HCT116 (cell line): ENCODE measurements at regions of chr3 and their contacts with region 1.

Region 1: GRCh38 chr3:49929331-49930240 is at the start of gene MON1A:
- DNase-seq: peak; percentile 67
- ATAC-seq: peak; percentile 86
- H3K4me3 ChIP-seq: peak within 1 kb of the TSS; percentile 52 to 68
- H3K27ac ChIP-seq: peak within 1 kb of the TSS; percentile 67
- H3K4me1 ChIP-seq: peaks cover 23 to 43% of the 10 kb centered on the region in 2 experiments
- H3K27me3 ChIP-seq: no peaks in the 10 kb centered on the region
- CTCF ChIP-seq: peak; percentile 32 to 46 (median 32); a peak in 4 of 6 replicates
- POLR2A ChIP-seq: no peak
- RAD21 ChIP-seq: no peak; the same call in 1 of the 2 replicates
- total RNA-seq, gene MON1A: 9.0 TPM

Region 2: DNA sequence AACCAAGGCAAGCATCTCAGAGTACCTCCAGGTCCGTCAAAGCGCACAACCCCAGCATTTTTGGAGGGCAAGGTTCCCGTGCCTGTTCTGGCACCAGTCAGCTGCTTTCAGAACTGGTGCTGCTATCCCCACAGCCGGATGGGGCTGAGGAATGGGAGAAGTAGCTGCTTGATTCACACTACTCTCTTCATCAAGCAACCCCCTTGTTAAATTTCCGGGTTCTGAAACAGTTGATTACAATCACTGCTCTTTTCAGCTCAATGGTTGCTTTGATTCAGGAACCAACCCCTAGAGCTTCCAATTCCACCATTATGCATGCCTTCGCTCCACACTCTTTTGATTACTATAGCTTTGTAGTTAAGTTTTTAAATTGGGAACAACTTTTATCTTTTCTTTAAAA is 103.6 kb before region 1 on chr3:
- CTCF ChIA-PET with region 1: no interaction called
- POLR2A ChIA-PET with region 1: no interaction called
- RAD21 ChIA-PET with region 1: no interaction called
- intact Hi-C with region 1: no loop called
- DNase-seq: no peak
- ATAC-seq: no peak
- H3K4me3 ChIP-seq: no peak overlapping the region
- H3K27ac ChIP-seq: no peak overlapping the region
- H3K4me1 ChIP-seq: no peaks in the 10 kb centered on the region
- H3K27me3 ChIP-seq: no peaks in the 10 kb centered on the region
- CTCF ChIP-seq: no peak
- POLR2A ChIP-seq: no peak
- RAD21 ChIP-seq: no peak

Region 3: GRCh38 chr3:49939858-49940666 is 10.5 kb after region 1 on chr3 and contains the start of gene RBM6:
- CTCF ChIA-PET with region 1: interaction called, 15 read pairs
- POLR2A ChIA-PET with region 1: interaction called, 38 read pairs
- RAD21 ChIA-PET with region 1: no interaction called
- intact Hi-C with region 1: no loop called
- DNase-seq: peak; percentile 93
- ATAC-seq: peak; percentile 97
- H3K4me3 ChIP-seq: peak within 1 kb of the TSS; percentile 82 to 96
- H3K27ac ChIP-seq: peak within 1 kb of the TSS; percentile 91
- H3K4me1 ChIP-seq: peaks cover 5 to 15% of the 10 kb centered on the region in 2 experiments; a peak in 3 of 4 replicates
- H3K27me3 ChIP-seq: no peaks in the 10 kb centered on the region
- CTCF ChIP-seq: no peak
- POLR2A ChIP-seq: peak; percentile 74
- RAD21 ChIP-seq: no peak
- total RNA-seq, gene RBM6: 58.3 TPM

Region 4: GRCh38 chr3:50078622-50079021 is 149.0 kb after region 1 on chr3:
- CTCF ChIA-PET with region 1: no interaction called
- POLR2A ChIA-PET with region 1: no interaction called
- RAD21 ChIA-PET with region 1: no interaction called
- intact Hi-C with region 1: no loop called
- DNase-seq: no peak
- ATAC-seq: no peak
- H3K4me3 ChIP-seq: no peak overlapping the region
- H3K27ac ChIP-seq: no peak overlapping the region
- H3K4me1 ChIP-seq: no peaks in the 10 kb centered on the region
- H3K27me3 ChIP-seq: no peaks in the 10 kb centered on the region
- CTCF ChIP-seq: no peak
- POLR2A ChIP-seq: no peak
- RAD21 ChIP-seq: no peak